Right ventricle myocardium inferior (tissue), 1 donor: ENCODE measurements at regions of chr19 and their contacts with region 1.

Region 1: DNA sequence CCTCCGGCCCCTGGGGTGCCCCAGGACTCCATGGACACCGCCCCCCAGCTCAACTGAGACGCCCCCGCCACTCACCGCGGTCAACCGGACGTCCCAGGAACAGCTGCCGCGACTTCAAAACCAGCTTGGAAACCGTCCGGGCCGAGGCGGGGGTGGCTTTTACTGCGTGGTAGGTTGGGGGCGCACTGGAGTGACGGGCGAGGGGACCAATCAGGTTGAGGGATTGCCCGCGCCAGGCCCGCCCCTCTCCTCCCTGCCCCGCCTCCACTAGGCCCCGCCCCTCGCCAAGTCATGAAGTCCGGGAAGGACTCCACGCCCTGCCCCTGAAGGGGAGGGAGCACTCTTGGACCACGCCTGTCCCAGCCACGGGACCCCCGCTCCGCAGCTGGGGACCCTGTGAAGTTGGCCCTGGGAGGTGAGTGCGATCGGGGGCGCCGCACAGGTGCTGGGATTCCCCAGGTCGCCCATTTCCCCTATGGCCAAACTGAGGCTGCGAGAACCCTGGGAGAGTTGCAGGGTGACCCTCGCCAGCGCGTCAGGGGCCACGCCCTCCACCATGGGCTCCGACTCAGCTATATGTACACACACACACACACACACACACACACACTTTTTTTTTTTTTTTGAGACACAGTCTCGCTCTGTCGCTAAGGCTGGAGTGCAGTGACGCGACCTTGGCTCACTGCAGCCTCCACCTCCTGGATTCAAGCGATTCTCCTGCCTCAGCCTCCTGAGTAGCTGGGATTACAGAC is at the start of gene PLIN3:
- DNase-seq: peak; percentile 99
- ATAC-seq: peak; percentile 98
- total RNA-seq, gene PLIN3: 34.0 TPM

Region 2: GRCh38 chr19:4911786-4912672 is 44.3 kb after region 1 on chr19:
- intact Hi-C with region 1: loop called (anchors 1 kb)
- DNase-seq: no peak
- ATAC-seq: peak; percentile 39